ENCODE measurements at regions of chr6 and their contacts with region 1.

Region 1: DNA sequence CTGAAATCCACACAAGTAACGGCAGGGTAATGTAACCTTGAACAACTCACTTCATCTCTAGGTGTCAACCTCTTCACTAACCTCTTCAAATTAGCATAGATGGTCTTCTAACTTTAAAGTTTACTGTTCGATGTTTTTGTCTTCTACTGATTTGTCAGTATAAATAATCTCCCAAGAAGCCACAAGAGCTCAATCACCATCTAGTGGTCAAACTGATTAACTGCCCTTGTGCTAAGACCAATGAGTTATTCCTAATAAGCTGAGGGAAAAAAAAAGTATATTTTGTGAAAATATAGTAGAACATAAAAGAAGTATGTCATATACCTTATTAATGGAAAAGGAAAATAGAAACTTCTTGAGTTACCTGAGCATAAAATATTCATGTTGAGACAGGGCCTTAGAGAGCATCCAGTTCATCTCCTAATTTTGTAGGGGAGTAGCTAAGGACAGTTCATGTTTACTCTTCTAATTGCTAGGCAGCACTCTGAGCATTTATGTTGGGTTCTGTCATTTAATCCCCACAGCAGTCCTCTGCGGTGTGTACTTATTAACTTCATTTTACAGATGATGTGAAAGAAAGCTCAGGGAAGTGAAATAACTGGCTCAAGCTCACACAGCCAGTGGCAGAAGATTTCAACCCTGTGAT is 317.1 kb downstream of the ESR1 start:
- DNase-seq: no peak
- ATAC-seq: peak; percentile 68 to 72
- H3K4me3 ChIP-seq: no peak overlapping the region
- H3K27ac ChIP-seq: peak overlapping the region in 2 of 4 donors; percentile 11 to 71
- H3K4me1 ChIP-seq: peaks cover 33 to 40% of the 10 kb centered on the region in 2 donors
- H3K27me3 ChIP-seq: no peaks in the 10 kb centered on the region
- CTCF ChIP-seq: peak; percentile 74 to 94 (median 85)
- POLR2A ChIP-seq: no peak

Region 2: DNA sequence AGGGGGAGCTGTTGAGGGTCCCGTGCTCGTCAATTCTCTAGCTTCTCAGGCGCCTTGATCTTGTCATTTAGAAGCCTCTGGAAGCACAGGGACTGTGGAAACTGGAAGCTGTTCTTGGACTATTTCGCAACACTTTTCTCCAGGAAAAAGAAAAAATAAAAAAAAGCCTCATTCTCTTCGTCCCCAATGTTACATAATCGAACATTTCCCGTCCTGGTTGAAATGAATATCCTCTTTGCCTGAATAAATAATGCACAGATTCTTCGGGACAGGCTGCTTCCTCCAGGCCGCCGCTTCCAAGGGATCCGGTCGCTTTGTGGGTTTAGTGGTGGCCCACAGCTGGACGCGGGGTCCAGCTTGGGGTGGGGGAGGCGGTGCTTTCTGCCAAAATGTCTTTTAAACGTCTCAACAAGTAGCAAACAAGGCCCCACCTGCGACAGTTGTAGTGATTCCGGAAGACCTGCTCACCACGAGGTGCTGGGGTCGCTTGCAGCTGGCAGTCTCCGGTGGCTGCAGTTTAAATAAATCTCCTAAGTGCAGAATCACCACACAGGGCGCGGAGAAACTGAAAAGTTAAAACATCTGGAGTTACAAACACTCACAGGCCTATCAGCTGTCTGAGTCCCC is 443.0 kb before region 1 on chr6:
- in situ Hi-C with region 1: loop called in 1 of 4 experiments (anchors 10 kb)
- intact Hi-C with region 1: loop called (anchors 5 kb)
- DNase-seq: no peak
- ATAC-seq: peak; percentile 42 to 45
- H3K4me3 ChIP-seq: peak overlapping the region; percentile 24 to 58 (median 42)
- H3K27ac ChIP-seq: peak overlapping the region; percentile 36 to 55 (median 45)
- H3K4me1 ChIP-seq: peaks cover 0 to 8% of the 10 kb centered on the region in 2 donors
- H3K27me3 ChIP-seq: no peaks in the 10 kb centered on the region
- CTCF ChIP-seq: no peak
- POLR2A ChIP-seq: no peak

Region 3: DNA sequence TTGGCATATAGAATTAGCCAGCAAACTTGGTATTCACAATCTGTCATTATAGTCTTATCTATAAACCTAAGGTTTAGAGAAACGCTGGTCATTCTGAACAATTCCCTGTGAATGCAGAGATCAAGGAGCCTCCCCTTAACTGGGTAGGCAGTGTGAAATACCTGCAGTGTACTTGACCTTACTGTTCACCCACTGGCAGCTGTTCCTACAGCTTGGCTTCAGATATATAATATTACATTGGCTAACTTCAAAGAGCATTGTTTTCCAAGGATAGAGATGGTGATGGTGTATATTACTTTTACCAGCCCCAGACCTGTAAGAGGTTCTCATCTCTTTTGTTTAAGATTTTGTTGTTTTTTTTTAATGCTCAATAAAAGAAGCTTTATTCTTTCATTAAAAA is 148.8 kb before region 1 on chr6:
- in situ Hi-C with region 1: no loop called
- intact Hi-C with region 1: loop called (anchors 5 kb)
- DNase-seq: no peak
- ATAC-seq: peak; percentile 94 to 95
- H3K4me3 ChIP-seq: no peak overlapping the region
- H3K27ac ChIP-seq: peak overlapping the region in 1 of 4 donors; percentile 68
- H3K4me1 ChIP-seq: peaks cover 6 to 12% of the 10 kb centered on the region in 2 donors
- H3K27me3 ChIP-seq: no peaks in the 10 kb centered on the region
- CTCF ChIP-seq: no peak
- POLR2A ChIP-seq: no peak